Kidney (tissue), 22 donors: ENCODE measurements at regions of chr5 and their contacts with region 1.

Region 1: DNA sequence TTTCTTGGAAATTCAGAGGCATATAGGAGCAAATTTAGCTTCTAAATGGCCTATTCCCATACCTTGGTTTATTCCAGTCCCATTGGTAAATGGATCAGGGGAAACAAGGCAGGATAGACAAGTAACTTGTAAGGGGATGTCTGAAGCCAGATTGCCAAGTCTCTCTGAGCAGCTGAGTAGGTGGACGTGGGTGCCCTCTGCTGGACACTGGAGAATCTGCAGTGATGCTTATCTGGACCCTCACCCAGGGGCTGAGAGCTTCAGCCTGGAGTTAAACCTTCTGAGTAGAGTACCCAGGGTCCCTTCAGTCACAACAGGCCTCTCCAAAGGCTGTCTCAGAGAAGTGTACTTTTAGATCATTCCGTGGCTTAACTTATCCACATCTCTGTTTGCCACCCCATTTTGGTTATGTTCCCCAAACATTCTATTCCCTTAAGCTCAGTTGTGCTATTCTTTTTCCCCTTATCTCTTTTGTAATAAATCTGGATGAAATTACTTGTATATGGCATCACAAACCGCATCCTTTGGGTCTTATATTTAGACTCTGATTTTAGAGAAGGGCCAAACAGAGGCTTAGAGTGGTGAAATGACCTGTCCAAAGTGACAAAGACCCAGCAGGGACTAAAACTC is 218.3 kb upstream of the GLRA1 start:
- DNase-seq: peak; percentile 40 to 80 (median 67)
- H3K4me3 ChIP-seq: no peak overlapping the region
- H3K27ac ChIP-seq: no peak overlapping the region
- H3K4me1 ChIP-seq: peaks cover 0 to 3% (median 0%) of the 10 kb centered on the region in 3 donors
- H3K27me3 ChIP-seq: no peaks in the 10 kb centered on the region
- CTCF ChIP-seq: peak; percentile 78

Region 2: GRCh38 chr5:151825445-151825844 is 317.5 kb before region 1 on chr5:
- intact Hi-C with region 1: loop called (anchors 5 kb)
- DNase-seq: peak in 4 of 5 donors; percentile 56 to 85 (median 66)
- H3K4me3 ChIP-seq: no peak overlapping the region
- H3K27ac ChIP-seq: no peak overlapping the region
- H3K4me1 ChIP-seq: no peaks in the 10 kb centered on the region
- H3K27me3 ChIP-seq: no peaks in the 10 kb centered on the region
- CTCF ChIP-seq: peak; percentile 90

Region 3: GRCh38 chr5:152427721-152428120 is 284.8 kb after region 1 on chr5:
- intact Hi-C with region 1: no loop called
- DNase-seq: peak in 1 of 5 donors; percentile 4
- H3K4me3 ChIP-seq: no peak overlapping the region
- H3K27ac ChIP-seq: no peak overlapping the region
- H3K4me1 ChIP-seq: no peaks in the 10 kb centered on the region
- H3K27me3 ChIP-seq: no peaks in the 10 kb centered on the region
- CTCF ChIP-seq: no peak